PC-3 (cell line): ENCODE measurements at regions of chr3 and their contacts with region 1.

Region 1: DNA sequence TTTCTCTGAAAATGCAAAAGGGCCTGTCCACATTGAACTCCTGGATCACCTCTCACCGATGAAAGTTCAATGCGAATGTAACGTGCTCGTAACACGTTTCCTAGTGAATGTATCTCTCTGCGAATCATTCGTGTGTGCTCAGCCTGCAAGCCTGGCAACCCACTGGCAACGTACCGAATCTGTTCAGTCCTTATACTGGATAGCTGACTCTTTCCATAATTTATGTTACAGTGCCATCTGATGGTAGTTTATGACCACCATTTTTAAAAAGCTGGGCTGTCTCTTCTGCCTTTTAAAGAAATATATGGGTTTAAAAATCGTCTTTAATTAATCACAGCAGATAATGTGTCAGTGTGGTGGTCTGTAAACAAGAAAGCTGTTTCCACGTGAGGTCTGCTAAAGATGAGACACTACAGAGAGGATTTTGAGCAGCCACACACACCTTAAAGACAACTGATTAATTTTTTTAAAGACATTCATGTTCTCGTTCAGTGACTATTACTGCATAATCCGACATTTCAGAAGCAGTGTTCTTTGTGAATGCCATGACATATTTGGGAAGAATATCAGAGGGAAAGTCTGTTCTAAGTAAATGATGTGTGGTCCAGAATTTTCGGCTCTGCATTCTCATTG is 69.4 kb upstream of the FOXP1 start:
- DNase-seq: peak; percentile 76
- ATAC-seq: peak; percentile 76
- H3K4me3 ChIP-seq: peak overlapping the region; percentile 31; the same call in 1 of the 2 replicates
- H3K27ac ChIP-seq: no peak overlapping the region
- H3K4me1 ChIP-seq: peaks cover 14% of the 10 kb centered on the region
- H3K27me3 ChIP-seq: no peaks in the 10 kb centered on the region
- CTCF ChIP-seq: peak; percentile 90

Region 2: DNA sequence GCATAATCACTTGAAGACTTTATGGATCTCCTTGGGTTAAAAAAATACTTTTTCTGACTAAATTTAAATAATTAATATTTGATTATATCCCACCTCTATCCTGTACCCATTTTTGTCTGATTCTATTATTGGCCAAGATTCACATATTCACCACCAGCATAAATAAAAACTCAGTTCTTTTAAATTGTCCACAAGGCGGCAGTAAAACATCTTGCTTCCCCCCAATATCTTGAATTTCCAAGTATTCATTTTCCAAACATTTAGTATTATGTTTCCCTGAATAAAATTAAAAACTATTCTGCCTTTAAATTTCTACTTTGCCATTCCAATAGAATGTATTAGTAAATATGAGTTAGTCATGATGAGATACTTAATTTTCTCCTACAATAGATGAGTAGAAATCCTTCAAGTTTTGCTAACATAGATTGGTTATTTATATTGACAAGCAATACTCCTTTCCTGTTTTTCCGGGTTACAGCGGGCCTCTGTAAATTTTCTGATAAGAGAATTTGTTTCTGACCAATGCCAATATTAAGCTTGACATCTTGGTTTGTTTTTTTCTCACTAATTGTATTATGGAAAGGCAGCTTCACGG is 1121.7 kb before region 1 on chr3:
- CTCF ChIA-PET with region 1: no interaction called
- POLR2A ChIA-PET with region 1: no interaction called
- intact Hi-C with region 1: loop called (anchors 1 kb)
- DNase-seq: peak; percentile 26
- ATAC-seq: no peak
- H3K4me3 ChIP-seq: no peak overlapping the region
- H3K27ac ChIP-seq: no peak overlapping the region
- H3K4me1 ChIP-seq: no peaks in the 10 kb centered on the region
- H3K27me3 ChIP-seq: no peaks in the 10 kb centered on the region
- CTCF ChIP-seq: peak; percentile 57

Region 3: GRCh38 chr3:71006810-71007785 is 645.8 kb before region 1 on chr3:
- CTCF ChIA-PET with region 1: no interaction called
- POLR2A ChIA-PET with region 1: no interaction called
- intact Hi-C with region 1: loop called (anchors 2 kb)
- DNase-seq: peak; percentile 69
- ATAC-seq: peak; percentile 60
- H3K4me3 ChIP-seq: no peak overlapping the region
- H3K27ac ChIP-seq: peak overlapping the region; percentile 35
- H3K4me1 ChIP-seq: peaks cover 23% of the 10 kb centered on the region
- H3K27me3 ChIP-seq: no peaks in the 10 kb centered on the region
- CTCF ChIP-seq: peak; percentile 82

Region 4: GRCh38 chr3:71109241-71109976 is 543.5 kb before region 1 on chr3:
- CTCF ChIA-PET with region 1: no interaction called
- POLR2A ChIA-PET with region 1: no interaction called
- intact Hi-C with region 1: loop called (anchors 1 kb)
- DNase-seq: peak; percentile 86
- ATAC-seq: peak; percentile 56
- H3K4me3 ChIP-seq: peak overlapping the region; percentile 63
- H3K27ac ChIP-seq: peak overlapping the region; percentile 92
- H3K4me1 ChIP-seq: peaks cover 56% of the 10 kb centered on the region
- H3K27me3 ChIP-seq: no peaks in the 10 kb centered on the region
- CTCF ChIP-seq: no peak

Region 5: GRCh38 chr3:71339049-71339448 is 313.8 kb before region 1 on chr3:
- CTCF ChIA-PET with region 1: no interaction called
- POLR2A ChIA-PET with region 1: interaction called, 21 read pairs
- intact Hi-C with region 1: no loop called
- DNase-seq: no peak
- ATAC-seq: no peak
- H3K4me3 ChIP-seq: no peak overlapping the region
- H3K27ac ChIP-seq: no peak overlapping the region
- H3K4me1 ChIP-seq: peaks cover 8% of the 10 kb centered on the region
- H3K27me3 ChIP-seq: no peaks in the 10 kb centered on the region
- CTCF ChIP-seq: no peak

Region 6: GRCh38 chr3:71611099-71611498 is 41.8 kb before region 1 on chr3:
- CTCF ChIA-PET with region 1: no interaction called
- POLR2A ChIA-PET with region 1: no interaction called
- intact Hi-C with region 1: no loop called
- DNase-seq: no peak
- ATAC-seq: no peak
- H3K4me3 ChIP-seq: no peak overlapping the region
- H3K27ac ChIP-seq: no peak overlapping the region
- H3K4me1 ChIP-seq: no peaks in the 10 kb centered on the region
- H3K27me3 ChIP-seq: no peaks in the 10 kb centered on the region
- CTCF ChIP-seq: no peak